Left colon (tissue), 2 donors: ENCODE measurements at regions of chr11 and their contacts with region 1.

Region 1: GRCh38 chr11:33362051-33362910 is 105.1 kb downstream of the HIPK3 start:
- DNase-seq: no peak
- ATAC-seq: peak; percentile 58

Region 2: GRCh38 chr11:33310720-33311500 is 51.4 kb before region 1 on chr11:
- intact Hi-C with region 1: no loop called
- DNase-seq: no peak
- ATAC-seq: no peak

Region 3: DNA sequence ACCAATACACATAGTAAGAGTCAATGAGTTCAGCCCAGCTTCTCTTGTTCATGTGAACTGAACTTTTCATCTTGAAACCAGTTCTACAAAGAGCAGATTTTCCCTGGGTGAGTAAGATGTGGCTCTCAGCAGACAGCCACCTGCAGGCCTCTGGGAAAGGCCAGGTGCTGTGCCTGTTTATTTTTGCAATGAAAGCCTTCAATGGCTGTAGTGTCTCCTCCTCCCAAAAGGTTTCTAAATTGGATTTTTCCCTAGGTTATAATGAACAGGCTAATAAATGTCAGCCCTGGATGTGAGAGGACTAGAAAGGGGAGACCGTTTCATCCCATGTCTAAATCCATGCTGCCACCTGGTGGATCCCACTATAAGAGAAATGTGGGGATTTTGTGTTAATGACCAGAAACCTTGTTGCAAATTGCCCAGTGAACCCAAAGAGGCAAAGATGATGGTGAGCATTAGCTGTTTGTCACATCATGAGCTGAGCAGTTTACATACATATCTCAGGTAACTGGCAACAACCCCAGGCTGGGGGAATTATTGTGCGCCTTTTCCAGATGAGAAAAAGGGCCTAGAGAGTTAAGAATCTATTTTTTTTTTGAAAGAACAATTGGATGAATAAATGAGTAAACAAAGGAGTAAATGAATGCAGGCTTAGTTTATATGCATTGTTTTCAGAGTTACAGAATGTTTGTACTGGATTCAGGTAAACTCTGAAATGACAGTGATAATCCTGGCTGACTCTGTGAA is 325.6 kb after region 1 on chr11:
- intact Hi-C with region 1: loop called (anchors 10 kb)
- DNase-seq: peak in 1 of 2 donors; percentile 51
- ATAC-seq: no peak

Region 4: DNA sequence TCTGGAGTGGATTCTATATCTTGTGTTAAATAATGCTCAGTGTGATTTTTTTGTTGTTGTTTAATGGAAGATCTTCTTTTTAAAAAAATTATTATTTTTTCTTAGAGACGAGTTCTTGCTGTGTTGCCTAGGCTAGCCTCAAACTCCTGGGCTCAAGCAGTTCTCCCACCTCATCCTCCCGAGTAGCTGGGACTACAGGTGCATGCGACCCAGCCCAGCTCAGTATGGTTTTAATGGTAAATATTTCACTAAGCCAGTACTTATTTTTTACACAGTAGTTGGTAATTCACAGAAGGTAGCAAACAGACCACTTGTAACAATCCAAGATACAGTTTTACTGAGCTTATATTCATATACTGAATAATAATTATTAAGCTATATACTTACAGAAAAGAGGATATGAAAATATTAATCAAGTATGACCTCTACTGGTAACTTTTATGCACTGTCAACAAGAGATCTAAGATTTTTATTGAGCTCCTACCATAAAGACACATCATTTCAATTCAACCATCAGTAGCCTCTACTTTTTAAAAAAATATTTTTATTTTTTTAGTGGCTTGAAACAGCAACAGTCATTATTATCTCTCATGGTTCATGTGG is 380.1 kb after region 1 on chr11:
- intact Hi-C with region 1: loop called in 1 of 2 experiments (anchors 5 kb)
- DNase-seq: no peak
- ATAC-seq: peak; percentile 70